Dendritic cell treated with granulocyte-macrophage colony-stimulating factor and Interleukin-4, amounts not matched to agents 40 ng/mL and 50 ng/mL, for 4 days (primary cell): ENCODE measurements at regions of chr20 and their contacts with region 1.

Region 1: DNA sequence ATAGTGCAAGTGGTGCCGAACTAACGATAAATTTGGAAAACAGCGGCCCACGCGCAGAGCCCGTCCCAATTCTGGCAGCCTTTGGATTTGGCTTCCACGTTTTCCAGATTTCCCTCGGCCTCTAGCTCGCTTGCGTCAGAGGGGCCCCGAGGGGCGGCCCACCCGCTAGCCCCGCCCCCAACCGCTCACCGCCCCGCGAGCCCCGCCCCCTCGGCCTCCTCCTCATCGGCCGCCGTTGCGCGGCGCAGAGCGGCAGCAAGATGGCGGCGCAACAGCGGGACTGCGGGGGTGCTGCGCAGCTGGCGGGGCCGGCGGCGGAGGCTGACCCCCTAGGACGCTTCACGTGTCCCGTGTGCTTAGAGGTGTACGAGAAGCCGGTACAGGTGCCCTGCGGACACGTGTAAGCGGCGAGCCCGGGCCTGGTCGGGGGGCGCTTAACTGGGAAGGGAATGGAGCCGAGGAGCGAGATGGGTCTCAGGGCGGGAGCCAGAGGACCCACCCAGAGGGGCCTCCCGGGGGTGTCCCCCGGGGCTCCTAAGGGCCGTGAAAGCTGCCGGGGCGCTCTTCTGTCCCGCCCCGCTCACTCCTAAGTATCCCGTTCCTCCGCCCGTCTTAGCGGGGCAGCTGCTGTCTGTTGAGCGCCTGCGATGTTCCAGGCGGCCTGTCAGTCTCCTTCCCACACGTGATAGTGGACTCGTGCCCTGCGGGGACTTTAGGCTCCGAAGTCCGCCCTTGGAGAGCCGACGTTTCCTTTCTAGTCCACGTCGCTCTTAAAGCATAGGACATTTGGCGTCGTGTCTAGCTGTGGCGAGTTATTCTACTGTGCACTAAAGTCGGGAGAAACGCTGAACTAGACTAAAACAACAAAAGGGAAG is at the start of gene RNF114:
- H3K4me3 Mint-ChIP-seq: peak within 1 kb of the TSS; percentile 95
- H3K27ac Mint-ChIP-seq: peak within 1 kb of the TSS; percentile 97
- H3K4me1 Mint-ChIP-seq: peaks cover 65% of the 10 kb centered on the region
- H3K27me3 Mint-ChIP-seq: no peaks in the 10 kb centered on the region

Region 2: DNA sequence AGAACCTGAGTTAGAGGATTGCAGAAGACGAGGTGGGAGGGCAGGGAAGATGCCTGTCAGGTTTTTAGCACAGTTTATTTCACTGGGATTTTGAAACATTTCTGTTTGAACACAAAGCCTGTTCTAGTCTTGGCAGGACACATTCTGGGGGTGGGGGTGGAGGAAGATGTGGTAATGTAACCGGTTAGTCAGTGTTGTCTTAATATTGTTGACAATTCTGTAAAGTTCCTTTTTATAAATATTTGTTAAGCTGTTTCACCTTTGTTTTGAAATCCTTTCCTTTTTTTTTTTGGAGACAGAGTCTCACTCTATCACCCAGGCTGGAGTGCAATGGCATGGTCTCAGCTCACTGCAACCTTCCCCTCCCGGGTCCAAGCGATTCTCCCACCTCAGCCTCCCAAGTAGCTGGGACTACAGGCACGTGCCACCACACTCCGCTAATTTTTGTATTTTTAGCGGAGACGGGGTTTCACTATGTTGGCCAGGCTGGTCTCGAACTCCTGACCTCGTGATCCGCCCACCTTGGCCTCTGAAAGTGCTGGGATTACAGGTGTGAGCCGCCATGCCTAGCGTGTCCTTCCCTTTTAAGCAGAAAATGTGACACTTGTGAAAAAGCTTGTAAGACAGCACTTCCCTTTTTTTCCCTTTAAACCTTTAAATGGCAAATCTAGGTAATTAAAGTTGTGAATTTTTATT is 103.6 kb before region 1 on chr20:
- intact Hi-C with region 1: no loop called
- H3K4me3 Mint-ChIP-seq: no peak overlapping the region
- H3K27ac Mint-ChIP-seq: peak overlapping the region; percentile 43
- H3K4me1 Mint-ChIP-seq: peaks cover 23% of the 10 kb centered on the region
- H3K27me3 Mint-ChIP-seq: no peaks in the 10 kb centered on the region

Region 3: DNA sequence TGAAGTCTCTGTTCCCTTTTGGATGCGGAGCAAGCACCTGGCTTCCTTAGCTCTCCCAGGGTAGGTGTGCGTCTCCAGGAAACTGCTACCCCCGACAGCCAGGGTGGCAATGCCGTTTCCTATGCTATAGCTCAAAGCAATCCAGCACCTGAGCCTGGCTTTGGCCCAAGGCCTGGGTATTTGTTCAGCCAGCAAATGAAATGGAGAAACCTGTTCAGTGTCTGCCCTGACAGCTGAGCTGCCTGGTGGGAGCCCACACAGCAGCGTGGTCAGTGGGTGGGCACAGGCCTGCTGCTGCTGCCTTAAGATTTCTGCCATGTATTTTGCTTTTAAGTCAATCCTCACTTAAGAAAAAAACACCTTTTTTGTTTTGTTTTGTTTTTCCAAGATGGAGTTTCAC is 34.8 kb before region 1 on chr20:
- intact Hi-C with region 1: no loop called
- H3K4me3 Mint-ChIP-seq: no peak overlapping the region
- H3K27ac Mint-ChIP-seq: no peak overlapping the region
- H3K4me1 Mint-ChIP-seq: peaks cover 14% of the 10 kb centered on the region
- H3K27me3 Mint-ChIP-seq: no peaks in the 10 kb centered on the region

Region 4: DNA sequence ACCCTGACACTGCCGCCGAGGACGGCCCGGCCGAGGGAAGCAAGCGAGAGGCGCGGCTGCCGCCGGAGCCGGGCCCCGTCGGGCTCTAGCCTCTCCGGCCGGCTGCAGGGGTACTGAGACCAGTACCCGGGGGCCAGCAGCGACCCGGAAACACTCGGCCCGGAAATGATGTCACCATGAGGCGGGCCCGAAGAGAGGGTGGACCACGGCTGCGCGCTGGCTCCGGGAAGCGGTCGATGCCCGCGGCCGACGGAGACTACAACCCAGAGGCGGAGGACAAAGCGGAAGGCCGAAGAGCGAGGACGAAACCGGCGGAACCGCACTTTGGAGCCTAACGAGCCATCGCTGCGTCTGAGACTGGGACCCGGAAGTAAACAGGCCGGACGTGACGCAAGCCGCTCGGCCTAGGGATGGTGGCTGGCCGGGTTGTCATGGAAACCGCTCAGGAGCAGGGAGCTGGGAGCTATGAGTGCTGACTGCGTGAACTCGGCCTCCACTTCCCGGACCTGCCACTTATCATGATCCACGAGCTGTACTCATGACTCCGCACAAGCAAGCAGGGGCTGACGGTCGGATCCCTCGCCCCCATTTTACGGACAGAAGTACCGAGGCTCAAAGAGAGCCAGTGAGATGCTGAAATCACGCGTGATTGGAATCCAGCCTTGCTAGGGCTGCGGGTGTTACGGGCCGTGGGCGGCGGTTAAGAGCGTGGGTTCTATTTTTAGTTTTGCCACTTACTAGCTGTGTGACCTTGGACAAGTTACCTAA is 20.8 kb before region 1 on chr20 and contains the start of gene SPATA2:
- intact Hi-C with region 1: loop called (anchors 2 kb)
- H3K4me3 Mint-ChIP-seq: peak within 1 kb of the TSS; percentile 98
- H3K27ac Mint-ChIP-seq: peak within 1 kb of the TSS; percentile 99
- H3K4me1 Mint-ChIP-seq: peaks cover 55% of the 10 kb centered on the region
- H3K27me3 Mint-ChIP-seq: no peaks in the 10 kb centered on the region

Region 5: DNA sequence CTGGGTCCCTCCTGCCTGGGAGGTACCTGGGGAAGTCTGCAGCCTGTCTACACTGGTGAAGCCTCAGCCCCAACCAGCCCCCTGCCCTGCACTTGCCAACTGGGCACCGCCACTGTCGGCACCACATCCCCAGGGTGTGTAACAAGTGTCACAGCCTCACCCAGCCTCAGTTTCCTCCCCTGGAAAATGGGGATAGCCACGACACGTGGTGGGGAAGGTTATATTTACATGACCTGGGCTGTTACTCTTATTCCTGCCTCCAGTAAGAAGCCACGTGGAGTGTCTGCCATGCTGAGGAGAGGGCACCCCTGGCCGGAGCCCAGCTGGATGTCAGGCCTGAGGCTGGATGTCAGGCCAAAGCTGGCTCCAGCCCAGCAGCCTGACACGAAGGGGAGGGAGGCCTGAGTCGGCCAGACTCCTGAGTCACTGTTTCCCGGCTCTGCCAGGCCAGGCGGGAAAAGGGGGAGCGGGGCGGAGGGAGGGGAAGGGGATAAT is 91.3 kb after region 1 on chr20:
- intact Hi-C with region 1: no loop called
- H3K4me3 Mint-ChIP-seq: no peak overlapping the region
- H3K27ac Mint-ChIP-seq: no peak overlapping the region
- H3K4me1 Mint-ChIP-seq: peaks cover 41% of the 10 kb centered on the region
- H3K27me3 Mint-ChIP-seq: peaks cover 5% of the 10 kb centered on the region